ENCODE measurements at regions of chr6 and their contacts with region 1.

Region 1: DNA sequence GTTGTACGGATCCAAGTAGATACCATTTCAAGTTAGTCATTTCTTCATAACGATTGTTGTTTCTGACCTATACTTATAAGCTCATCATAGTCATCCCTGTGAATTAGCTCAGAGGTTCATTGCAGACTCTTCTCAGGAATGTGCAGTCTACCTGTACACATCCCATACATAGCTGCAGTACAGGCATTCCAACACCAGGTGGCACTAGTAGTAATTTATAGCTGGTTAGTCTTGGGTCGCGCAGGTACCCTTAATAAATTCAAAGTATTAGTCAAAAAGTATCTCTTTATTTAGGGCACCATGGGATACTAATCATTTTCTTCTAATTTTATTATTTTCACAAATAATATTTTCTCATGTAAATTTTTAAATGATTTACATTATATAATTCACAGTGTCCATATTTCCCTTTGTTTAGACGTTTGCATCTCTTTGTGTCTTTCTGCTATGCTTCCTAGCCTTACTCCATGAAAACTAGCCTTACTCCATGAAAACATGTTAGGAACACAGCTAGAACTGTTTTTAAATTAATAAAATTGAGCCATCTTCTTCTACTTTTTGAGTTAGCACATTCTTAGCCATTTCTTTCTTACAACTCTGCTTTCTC is 128.6 kb upstream of the FAM83B start:
- DNase-seq: peak; percentile 67
- H3K4me3 ChIP-seq: no peak overlapping the region
- H3K27ac ChIP-seq: no peak overlapping the region
- H3K4me1 ChIP-seq: peaks cover 12% of the 10 kb centered on the region
- H3K27me3 ChIP-seq: no peaks in the 10 kb centered on the region
- CTCF ChIP-seq: peak; percentile 91

Region 2: GRCh38 chr6:54730767-54731630 is 13.0 kb after region 1 on chr6:
- CTCF ChIA-PET with region 1: interaction called, 13 read pairs
- POLR2A ChIA-PET with region 1: no interaction called
- intact Hi-C with region 1: no loop called
- DNase-seq: no peak
- H3K4me3 ChIP-seq: no peak overlapping the region
- H3K27ac ChIP-seq: no peak overlapping the region
- H3K4me1 ChIP-seq: no peaks in the 10 kb centered on the region
- H3K27me3 ChIP-seq: no peaks in the 10 kb centered on the region
- CTCF ChIP-seq: no peak

Region 3: GRCh38 chr6:54813892-54814291 is 95.9 kb after region 1 on chr6:
- CTCF ChIA-PET with region 1: no interaction called
- POLR2A ChIA-PET with region 1: no interaction called
- intact Hi-C with region 1: no loop called
- DNase-seq: peak; percentile 68
- H3K4me3 ChIP-seq: no peak overlapping the region
- H3K27ac ChIP-seq: no peak overlapping the region
- H3K4me1 ChIP-seq: peaks cover 8% of the 10 kb centered on the region
- H3K27me3 ChIP-seq: peaks cover 23% of the 10 kb centered on the region
- CTCF ChIP-seq: no peak

Region 4: DNA sequence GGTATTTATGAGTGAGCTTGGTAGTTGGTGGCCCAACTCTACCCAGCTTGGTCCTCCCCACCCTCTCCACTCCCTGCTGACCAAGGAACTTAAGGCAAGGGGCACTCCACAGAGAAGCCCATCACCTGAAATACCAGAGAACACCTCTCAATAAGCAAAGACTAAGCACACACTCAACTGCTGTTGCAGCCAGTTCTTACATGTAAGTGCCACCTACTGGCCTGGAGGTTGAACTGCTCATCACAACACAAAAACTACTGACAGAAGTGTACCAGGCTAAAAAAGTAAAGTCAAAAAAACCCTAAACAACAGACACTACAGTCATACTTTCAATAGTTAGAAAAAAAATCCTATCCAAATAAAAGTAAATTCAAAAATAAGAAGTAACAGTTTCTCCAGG is 274.8 kb after region 1 on chr6:
- CTCF ChIA-PET with region 1: interaction called, 4 read pairs
- POLR2A ChIA-PET with region 1: no interaction called
- intact Hi-C with region 1: loop called (anchors 5 kb)
- DNase-seq: peak; percentile 17
- H3K4me3 ChIP-seq: no peak overlapping the region
- H3K27ac ChIP-seq: no peak overlapping the region
- H3K4me1 ChIP-seq: peaks cover 4% of the 10 kb centered on the region
- H3K27me3 ChIP-seq: no peaks in the 10 kb centered on the region
- CTCF ChIP-seq: peak; percentile 57

Region 5: DNA sequence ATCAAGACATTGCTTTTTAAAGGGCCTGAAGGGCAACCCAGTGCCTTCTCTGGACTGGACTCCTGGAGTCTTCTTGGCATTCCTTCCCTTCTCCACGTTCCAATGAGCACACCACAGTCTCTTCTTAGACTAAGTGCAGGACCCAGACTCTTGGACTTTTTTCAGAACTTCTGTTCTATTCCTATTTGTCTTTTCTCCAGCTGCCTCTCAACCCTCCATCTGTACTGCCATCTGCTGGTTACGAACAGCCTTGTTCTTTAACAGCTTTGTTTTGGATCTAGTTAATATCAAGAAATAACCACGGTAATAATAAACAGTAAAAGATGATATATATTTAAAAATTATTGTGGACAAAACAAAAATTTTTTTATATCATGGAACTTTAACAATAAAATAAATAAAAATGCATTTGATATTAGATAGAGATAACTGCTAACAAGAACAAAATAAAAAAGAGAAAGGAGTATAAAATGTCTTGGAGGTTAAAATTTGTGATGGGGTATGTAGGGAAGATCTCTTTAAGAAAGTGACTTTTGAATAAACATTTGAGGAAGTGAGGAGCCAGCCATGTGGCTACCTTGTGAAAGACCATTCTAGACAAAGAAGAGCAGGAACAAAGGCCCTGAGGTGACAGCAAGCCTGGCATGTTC is 351.3 kb after region 1 on chr6:
- CTCF ChIA-PET with region 1: interaction called, 12 read pairs
- POLR2A ChIA-PET with region 1: no interaction called
- intact Hi-C with region 1: loop called (anchors 5 kb)
- DNase-seq: peak; percentile 71
- H3K4me3 ChIP-seq: no peak overlapping the region
- H3K27ac ChIP-seq: no peak overlapping the region
- H3K4me1 ChIP-seq: no peaks in the 10 kb centered on the region
- H3K27me3 ChIP-seq: no peaks in the 10 kb centered on the region
- CTCF ChIP-seq: peak; percentile 85

Region 6: GRCh38 chr6:55239099-55239498 is 521.1 kb after region 1 on chr6:
- CTCF ChIA-PET with region 1: no interaction called
- POLR2A ChIA-PET with region 1: no interaction called
- intact Hi-C with region 1: loop called (anchors 5 kb)
- DNase-seq: peak; percentile 23
- H3K4me3 ChIP-seq: no peak overlapping the region
- H3K27ac ChIP-seq: no peak overlapping the region
- H3K4me1 ChIP-seq: no peaks in the 10 kb centered on the region
- H3K27me3 ChIP-seq: no peaks in the 10 kb centered on the region
- CTCF ChIP-seq: no peak

Measured in A673 (cell line).